A673 (cell line): ENCODE measurements at regions of chr1 and their contacts with region 1.

Region 1: GRCh38 chr1:105793536-105794146 is 1262.8 kb upstream of the PRMT6 start:
- DNase-seq: peak; percentile 73
- H3K4me3 ChIP-seq: no peak overlapping the region
- H3K27ac ChIP-seq: no peak overlapping the region
- H3K4me1 ChIP-seq: no peaks in the 10 kb centered on the region
- H3K27me3 ChIP-seq: no peaks in the 10 kb centered on the region
- CTCF ChIP-seq: peak; percentile 88

Region 2: DNA sequence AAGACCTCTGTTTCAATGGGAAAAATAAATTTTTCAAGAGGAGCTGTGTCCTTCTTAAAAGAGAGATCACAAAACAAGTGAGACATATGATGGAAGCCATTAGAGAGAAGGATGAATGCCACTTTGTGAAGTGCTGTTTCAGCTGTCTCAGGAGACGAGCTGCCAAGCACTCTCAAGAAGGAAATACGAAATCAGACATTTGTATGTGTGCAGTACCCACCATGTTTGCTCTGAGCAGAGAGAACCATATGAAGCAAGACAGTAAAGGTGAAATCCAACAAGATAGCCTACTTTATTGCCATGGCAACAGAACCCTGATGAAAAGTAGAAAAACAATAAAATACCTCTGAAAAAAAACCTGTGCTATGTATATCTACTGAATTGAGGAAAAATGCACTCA is 1875.8 kb before region 1 on chr1:
- CTCF ChIA-PET with region 1: no interaction called
- POLR2A ChIA-PET with region 1: no interaction called
- intact Hi-C with region 1: no loop called
- DNase-seq: no peak
- H3K4me3 ChIP-seq: no peak overlapping the region
- H3K27ac ChIP-seq: no peak overlapping the region
- H3K4me1 ChIP-seq: no peaks in the 10 kb centered on the region
- H3K27me3 ChIP-seq: no peaks in the 10 kb centered on the region
- CTCF ChIP-seq: no peak

Region 3: GRCh38 chr1:103948526-103948925 is 1845.1 kb before region 1 on chr1:
- CTCF ChIA-PET with region 1: no interaction called
- POLR2A ChIA-PET with region 1: no interaction called
- intact Hi-C with region 1: loop called (anchors 5 kb)
- DNase-seq: peak; percentile 18
- H3K4me3 ChIP-seq: no peak overlapping the region
- H3K27ac ChIP-seq: no peak overlapping the region
- H3K4me1 ChIP-seq: no peaks in the 10 kb centered on the region
- H3K27me3 ChIP-seq: no peaks in the 10 kb centered on the region
- CTCF ChIP-seq: peak; percentile 56; the same call in 1 of the 2 replicates

Region 4: DNA sequence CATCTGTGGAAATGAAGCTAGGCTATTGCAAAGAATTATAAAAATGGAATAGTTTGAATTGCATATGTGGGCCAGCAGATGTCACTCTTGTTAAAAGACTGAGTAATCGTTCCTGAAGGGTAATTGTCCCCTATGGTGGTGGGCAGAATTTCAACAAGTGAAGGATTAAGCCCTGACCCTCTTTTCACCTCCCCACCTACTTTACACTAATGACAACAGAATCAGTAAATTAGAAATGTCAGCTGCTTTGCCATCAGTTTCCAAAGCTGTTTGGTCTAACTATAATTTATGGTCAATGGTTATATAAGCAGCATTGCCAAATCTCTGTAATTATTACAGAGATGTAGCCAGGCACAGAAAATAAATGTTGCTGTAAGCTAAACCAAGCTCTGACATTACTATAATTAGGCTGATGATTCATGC is 1145.4 kb before region 1 on chr1:
- CTCF ChIA-PET with region 1: interaction called, 4 read pairs
- POLR2A ChIA-PET with region 1: no interaction called
- intact Hi-C with region 1: loop called (anchors 5 kb)
- DNase-seq: peak; percentile 65
- H3K4me3 ChIP-seq: no peak overlapping the region
- H3K27ac ChIP-seq: no peak overlapping the region
- H3K4me1 ChIP-seq: no peaks in the 10 kb centered on the region
- H3K27me3 ChIP-seq: no peaks in the 10 kb centered on the region
- CTCF ChIP-seq: peak; percentile 66

Region 5: DNA sequence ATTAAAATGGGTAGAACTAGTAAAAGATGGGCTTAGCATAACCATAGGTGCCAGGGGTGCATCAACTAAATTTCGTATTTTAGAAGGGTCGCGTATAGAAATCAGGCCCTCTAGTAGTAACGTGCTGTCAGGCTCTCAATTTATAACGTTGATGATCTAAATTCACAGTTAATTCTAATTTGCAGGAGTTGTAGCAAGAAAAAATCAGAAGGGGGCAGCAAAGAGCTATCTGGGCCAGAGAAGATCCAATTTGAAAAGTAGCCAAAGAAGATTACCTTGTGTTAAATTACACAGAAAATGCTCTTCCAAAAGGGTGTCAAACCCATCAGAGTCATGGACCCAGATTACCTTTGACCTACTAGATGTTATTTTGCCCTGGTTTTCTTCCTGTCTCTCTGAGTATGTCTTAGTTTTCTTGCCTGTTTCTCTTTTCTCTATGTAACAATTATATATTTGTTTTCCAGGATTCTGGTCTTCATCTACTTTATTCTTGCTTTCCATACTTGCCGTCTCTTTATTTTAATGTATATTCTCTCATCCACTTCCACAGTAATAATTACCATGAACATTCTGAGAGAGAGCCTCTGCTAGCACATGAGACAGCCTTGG is 1013.1 kb before region 1 on chr1:
- CTCF ChIA-PET with region 1: no interaction called
- POLR2A ChIA-PET with region 1: no interaction called
- intact Hi-C with region 1: loop called (anchors 2 kb)
- DNase-seq: peak; percentile 65
- H3K4me3 ChIP-seq: no peak overlapping the region
- H3K27ac ChIP-seq: no peak overlapping the region
- H3K4me1 ChIP-seq: no peaks in the 10 kb centered on the region
- H3K27me3 ChIP-seq: no peaks in the 10 kb centered on the region
- CTCF ChIP-seq: peak; percentile 83